Posterior vena cava (tissue), 2 donors: ENCODE measurements at regions of chr20 and their contacts with region 1.

Region 1: DNA sequence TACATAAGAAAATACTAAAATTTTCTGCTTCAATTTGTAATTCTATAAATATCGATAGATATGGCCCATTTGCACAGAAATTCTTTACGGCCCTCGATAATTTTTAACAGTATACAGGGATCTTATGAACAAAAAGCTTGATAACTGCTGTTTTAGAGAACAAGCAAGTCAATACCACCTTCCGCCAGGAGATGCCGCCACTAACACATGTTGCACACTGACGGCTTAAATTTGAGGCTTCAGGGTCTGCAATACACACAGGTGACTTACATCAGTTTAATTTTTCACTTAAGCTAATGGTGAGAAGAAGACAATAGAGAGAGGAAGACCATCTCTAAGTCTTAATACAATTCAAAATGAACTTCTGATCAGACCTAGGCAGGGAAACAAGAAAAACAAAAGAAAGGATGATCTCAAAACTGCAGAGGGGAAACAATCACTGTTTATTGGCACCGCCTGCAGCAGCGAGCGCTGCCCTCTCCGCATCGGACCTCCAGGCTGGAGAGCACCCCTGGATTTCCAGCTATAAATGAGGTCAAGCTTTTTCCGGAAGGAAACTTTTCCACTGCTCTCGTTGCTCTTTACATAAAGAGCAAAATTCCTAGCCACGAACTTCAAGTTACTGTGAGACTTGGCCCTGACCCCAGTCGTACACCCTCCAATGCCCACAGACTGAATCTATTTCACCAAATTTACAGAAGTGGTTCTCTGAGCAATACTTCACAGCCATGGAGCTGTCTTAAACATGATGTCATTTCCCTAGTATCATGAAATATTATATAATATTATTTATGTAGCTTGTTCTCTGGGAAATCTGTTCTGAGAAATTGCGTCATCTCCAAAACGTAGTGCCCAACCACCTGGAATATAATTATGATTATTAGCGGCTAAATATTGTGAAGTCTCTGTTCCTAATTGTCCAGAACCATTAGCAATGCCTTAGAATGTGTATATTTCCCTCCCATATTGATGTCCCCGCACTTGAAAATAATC is 54.1 kb downstream of the OTOR start:
- DNase-seq: no peak

Region 2: DNA sequence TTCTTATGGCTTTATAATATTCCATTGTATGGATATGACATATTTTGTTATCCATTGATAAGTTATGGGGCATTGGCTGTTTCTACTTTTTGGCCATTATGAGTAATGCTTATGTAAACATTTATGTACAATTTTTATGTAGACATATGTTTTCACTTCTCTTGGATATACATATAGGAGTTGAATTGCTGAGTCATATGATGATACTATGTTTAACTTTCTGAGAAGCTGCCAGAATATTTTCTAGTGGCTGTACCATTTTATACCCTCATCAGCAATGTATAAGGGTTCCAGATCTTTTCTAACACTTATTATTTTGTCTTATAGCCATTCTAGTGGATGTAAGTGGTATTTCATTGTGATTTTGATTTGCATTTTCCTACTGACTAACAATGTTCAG is 31.0 kb before region 1 on chr20:
- intact Hi-C with region 1: no loop called
- DNase-seq: no peak

Region 3: GRCh38 chr20:17431621-17432364 is 629.6 kb after region 1 on chr20:
- intact Hi-C with region 1: loop called (anchors 5 kb)
- DNase-seq: no peak